ENCODE measurements at regions of chr17 and their contacts with region 1.

Region 1: DNA sequence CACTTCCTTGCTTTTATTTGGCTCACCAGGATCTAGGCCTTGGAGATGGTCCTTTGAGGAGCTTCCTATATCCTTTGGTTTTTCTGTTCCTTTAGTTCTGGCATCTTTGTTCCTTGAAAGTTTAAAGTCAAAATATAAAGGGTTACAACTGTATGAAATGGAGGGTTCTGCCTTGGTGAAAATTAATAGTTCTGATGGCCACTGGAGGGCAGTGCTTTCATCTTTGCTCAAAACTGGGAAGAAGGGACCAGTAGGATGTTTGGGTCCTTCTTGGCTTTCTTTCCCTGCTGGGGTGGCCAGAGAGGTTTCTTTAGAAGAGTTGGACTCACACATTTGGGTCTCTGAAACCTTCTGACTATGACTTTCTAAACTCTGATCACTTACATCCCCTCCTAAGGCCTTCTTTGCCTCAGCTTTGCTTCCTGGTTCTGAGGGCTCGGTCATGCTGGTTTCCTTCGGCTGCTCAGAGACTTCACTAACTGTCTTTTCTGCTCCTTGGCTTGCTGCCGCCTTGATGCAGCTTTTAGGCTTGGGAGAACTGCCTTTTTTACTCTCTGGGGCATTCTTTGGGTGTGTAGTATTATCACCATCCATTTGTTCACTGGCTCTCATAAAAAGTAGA is 10.9 kb upstream of the ITGA2B start:
- DNase-seq: no peak
- H3K4me3 ChIP-seq: no peak overlapping the region
- H3K27ac ChIP-seq: no peak overlapping the region
- H3K4me1 ChIP-seq: no peaks in the 10 kb centered on the region
- H3K27me3 ChIP-seq: no peaks in the 10 kb centered on the region
- CTCF ChIP-seq: peak; percentile 69
- EP300 ChIP-seq: no peak
- RAD21 ChIP-seq: peak; percentile 59

Region 2: DNA sequence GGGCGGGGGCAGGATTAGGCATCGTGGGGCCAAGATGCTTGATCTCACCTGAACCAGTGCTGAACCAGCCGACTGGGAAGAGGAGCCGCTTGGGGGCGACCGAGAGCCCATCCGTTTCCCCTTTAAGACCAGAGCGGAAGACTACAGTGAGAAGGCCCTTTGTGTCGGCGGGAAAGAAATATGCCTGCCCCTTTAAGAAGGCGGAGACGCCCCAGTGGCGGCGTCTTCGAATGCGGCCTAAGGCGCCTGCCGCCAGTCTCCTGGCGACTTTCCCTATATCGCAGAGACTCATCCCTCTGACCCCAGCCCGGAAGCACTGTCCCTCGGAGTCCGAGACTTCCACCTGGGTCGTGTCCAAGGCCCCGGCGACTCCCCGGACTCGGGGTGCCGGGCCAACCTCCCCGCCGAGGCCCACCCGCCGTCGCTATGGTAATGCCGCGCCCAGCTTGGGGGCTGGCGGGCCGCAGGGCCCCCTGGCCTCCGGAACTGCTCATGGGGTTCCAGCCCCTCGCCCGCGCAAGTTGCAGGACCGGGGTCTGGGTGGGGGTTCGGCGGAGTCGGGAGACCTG is 258.5 kb before region 1 on chr17 and contains the start of gene HROB:
- CTCF ChIA-PET with region 1: no interaction called
- POLR2A ChIA-PET with region 1: no interaction called
- DNase-seq: peak; percentile 92
- H3K4me3 ChIP-seq: peak within 1 kb of the TSS; percentile 65 to 97
- H3K27ac ChIP-seq: peak within 1 kb of the TSS in 1 of 2 experiments; percentile 84; a peak in 2 of 4 replicates
- H3K4me1 ChIP-seq: peaks cover 2 to 13% of the 10 kb centered on the region in 2 experiments; a peak in 3 of 4 replicates
- H3K27me3 ChIP-seq: no peaks in the 10 kb centered on the region
- CTCF ChIP-seq: peak; percentile 89
- EP300 ChIP-seq: no peak
- RAD21 ChIP-seq: peak; percentile 61
- polyA plus RNA-seq, gene HROB: 3.2 and 4.0 TPM in 2 replicates

Region 3: GRCh38 chr17:44266402-44267164 is 133.8 kb before region 1 on chr17:
- CTCF ChIA-PET with region 1: no interaction called
- POLR2A ChIA-PET with region 1: no interaction called
- DNase-seq: peak; percentile 69
- H3K4me3 ChIP-seq: no peak overlapping the region
- H3K27ac ChIP-seq: no peak overlapping the region
- H3K4me1 ChIP-seq: peaks cover 0 to 14% of the 10 kb centered on the region in 2 experiments; a peak in 1 of 4 replicates
- H3K27me3 ChIP-seq: no peaks in the 10 kb centered on the region
- CTCF ChIP-seq: no peak
- EP300 ChIP-seq: no peak
- RAD21 ChIP-seq: peak; percentile 66

Region 4: DNA sequence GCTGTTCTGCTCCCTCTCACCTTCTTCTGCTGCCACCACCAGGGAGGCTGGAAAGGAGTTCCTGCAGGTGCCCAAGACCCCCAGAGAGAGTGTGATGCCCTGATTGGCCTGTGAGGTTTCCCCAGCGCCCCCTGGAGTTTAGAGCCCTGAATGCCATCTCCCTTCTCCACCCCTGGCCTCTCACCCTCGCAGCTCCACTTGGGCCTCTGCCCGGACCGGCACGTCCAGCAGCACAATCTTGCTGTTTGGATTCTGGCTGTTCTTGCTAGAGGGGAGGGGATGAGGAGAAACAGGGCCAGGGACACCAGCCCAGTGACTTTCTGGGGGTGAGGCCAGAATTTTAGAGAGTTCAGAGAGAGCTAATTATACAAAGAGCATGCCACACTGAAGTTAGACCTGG is 24.2 kb before region 1 on chr17:
- CTCF ChIA-PET with region 1: interaction called, 10 read pairs
- POLR2A ChIA-PET with region 1: no interaction called
- DNase-seq: peak; percentile 81
- H3K4me3 ChIP-seq: no peak overlapping the region; a peak in 1 of 4 replicates
- H3K27ac ChIP-seq: no peak overlapping the region
- H3K4me1 ChIP-seq: no peaks in the 10 kb centered on the region
- H3K27me3 ChIP-seq: no peaks in the 10 kb centered on the region
- CTCF ChIP-seq: peak; percentile 51
- EP300 ChIP-seq: no peak
- RAD21 ChIP-seq: no peak

Region 5: GRCh38 chr17:44389723-44390202 is 10.6 kb before region 1 on chr17:
- CTCF ChIA-PET with region 1: interaction called, 12 read pairs
- POLR2A ChIA-PET with region 1: interaction called, 4 read pairs
- DNase-seq: no peak
- H3K4me3 ChIP-seq: no peak overlapping the region
- H3K27ac ChIP-seq: no peak overlapping the region
- H3K4me1 ChIP-seq: peaks cover 0 to 12% of the 10 kb centered on the region in 2 experiments; a peak in 1 of 4 replicates
- H3K27me3 ChIP-seq: no peaks in the 10 kb centered on the region
- CTCF ChIP-seq: no peak
- EP300 ChIP-seq: no peak
- RAD21 ChIP-seq: no peak

Measured in SK-N-SH (cell line).